ENCODE measurements at regions of chr12 and their contacts with region 1.

Region 1: DNA sequence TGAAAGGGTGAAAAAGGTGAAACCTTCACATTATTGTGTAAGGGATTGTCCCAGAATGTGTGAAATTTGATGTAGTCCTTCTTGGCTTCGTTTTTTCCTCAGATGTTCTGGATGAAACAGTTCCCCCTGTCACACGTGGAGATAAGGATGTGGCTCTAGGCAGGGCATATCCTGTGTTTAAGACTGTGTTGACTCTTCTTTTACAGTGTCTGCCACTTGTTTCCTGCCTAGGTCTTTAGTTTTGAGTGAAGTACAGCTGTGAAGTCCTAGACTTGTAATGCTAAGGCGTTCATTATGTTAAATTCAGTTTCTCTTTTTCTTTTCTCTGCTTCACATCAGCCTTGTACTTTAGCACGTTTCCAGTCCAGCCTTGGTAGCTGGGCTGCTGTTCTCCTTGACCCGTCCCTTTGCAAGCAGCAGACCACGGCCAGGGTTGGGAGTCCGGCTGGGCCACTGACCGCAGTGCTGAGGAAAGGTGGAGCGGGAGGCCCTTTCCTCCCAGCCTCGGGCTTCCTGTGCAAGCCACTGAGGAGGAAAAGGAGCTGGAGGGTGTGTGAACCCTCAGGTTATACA is 59.1 kb downstream of the RASSF3 start:
- DNase-seq: peak; percentile 73
- ATAC-seq: peak; percentile 82
- H3K4me3 ChIP-seq: peak overlapping the region; percentile 74
- H3K27ac ChIP-seq: peak overlapping the region; percentile 91
- H3K4me1 ChIP-seq: peaks cover 77% of the 10 kb centered on the region
- H3K27me3 ChIP-seq: no peaks in the 10 kb centered on the region
- CTCF ChIP-seq: no peak
- EP300 ChIP-seq: no peak
- POLR2A ChIP-seq: peak; percentile 31; the same call in 1 of the 2 replicates
- RAD21 ChIP-seq: no peak

Region 2: DNA sequence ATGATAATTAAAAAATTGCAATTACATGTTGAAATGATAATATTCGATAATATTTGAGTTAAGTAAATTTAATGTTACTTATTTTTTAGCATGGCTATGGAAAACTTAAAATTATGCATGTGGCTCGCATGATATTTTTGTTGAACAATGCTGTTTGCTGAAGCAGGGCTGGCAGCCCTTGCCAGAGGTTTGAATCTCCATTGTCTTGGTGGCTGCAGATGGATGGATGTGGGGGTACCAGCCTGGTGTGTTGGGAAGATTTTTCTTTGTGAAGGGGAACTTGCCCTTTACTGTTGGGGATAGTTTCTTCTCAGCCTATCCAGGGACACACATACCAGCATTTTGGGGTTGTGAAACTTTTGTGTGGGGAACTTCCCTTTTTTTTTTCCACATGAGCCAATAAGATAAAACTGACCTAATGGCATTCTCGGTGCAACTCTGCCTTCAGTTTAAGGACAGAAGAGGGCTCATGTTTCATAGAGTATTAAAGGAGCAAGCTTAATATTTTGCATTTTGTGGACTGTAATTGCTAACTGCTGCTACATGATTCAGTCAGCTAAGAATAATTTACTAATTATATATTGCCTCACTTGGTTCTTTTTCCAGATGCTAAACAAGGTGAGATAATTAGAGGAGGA is 50.3 kb before region 1 on chr12:
- CTCF ChIA-PET with region 1: interaction called, 7 read pairs
- POLR2A ChIA-PET with region 1: interaction called, 13 read pairs
- RAD21 ChIA-PET with region 1: interaction called, 11 read pairs
- SMC1A ChIA-PET with region 1: interaction called, 62 read pairs
- in situ Hi-C with region 1: no loop called
- intact Hi-C with region 1: loop called (anchors 2 kb)
- DNase-seq: peak; percentile 77
- ATAC-seq: peak; percentile 59
- H3K4me3 ChIP-seq: peak overlapping the region; percentile 57
- H3K27ac ChIP-seq: peak overlapping the region; percentile 93
- H3K4me1 ChIP-seq: peaks cover 49% of the 10 kb centered on the region
- H3K27me3 ChIP-seq: no peaks in the 10 kb centered on the region
- CTCF ChIP-seq: no peak
- EP300 ChIP-seq: peak; percentile 38 to 42; a peak in 1 of 4 replicates
- POLR2A ChIP-seq: no peak
- RAD21 ChIP-seq: 0 out of 2 replicates have a peak, but pooled peaks have one; percentile 6

Region 3: DNA sequence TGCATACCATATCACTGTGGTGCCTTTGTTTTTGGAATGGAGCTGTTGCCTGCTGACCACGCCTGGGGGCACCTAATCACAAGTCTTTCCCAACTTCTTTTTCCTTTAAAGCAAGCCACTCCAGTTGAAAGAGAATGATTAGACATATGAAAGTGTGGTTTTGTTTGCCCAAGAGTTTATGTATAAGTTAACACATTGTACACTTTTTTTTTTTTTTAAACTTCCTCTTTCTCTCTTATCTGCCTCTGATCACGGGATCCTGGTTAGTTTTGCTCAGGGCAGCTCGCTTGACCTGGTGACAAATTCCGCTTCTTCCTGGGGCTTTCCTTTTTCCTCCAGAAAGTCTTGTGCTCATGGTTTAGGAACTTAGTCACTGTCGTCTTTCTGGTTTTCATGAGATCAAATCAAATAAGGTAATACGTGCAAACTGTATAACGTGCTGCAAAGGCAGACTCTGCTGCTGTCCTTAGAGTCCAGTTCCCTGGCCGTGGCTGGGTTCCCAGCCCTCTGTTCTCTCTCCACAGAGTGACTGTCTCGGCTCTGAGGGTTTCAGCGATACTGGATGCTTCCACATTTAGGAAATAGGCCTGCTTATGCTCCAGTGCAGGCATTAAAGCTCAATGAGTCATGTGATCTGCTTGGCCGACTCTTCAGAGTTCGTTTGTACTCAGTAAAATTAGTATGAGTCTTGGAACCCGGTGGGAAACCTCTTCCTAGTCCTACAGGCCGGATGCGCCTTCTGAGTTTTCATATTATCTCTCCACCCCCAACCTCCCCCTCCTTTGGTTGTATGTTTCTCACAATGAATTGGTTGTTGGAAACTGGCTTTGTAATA is 43.9 kb before region 1 on chr12:
- CTCF ChIA-PET with region 1: interaction called, 14 read pairs
- POLR2A ChIA-PET with region 1: interaction called, 13 read pairs
- RAD21 ChIA-PET with region 1: interaction called, 11 read pairs
- SMC1A ChIA-PET with region 1: interaction called, 62 read pairs
- in situ Hi-C with region 1: no loop called
- intact Hi-C with region 1: loop called (anchors 2 kb)
- DNase-seq: peak; percentile 78
- ATAC-seq: peak; percentile 64
- H3K4me3 ChIP-seq: peak overlapping the region; percentile 66
- H3K27ac ChIP-seq: peak overlapping the region; percentile 98
- H3K4me1 ChIP-seq: peaks cover 39% of the 10 kb centered on the region
- H3K27me3 ChIP-seq: no peaks in the 10 kb centered on the region
- CTCF ChIP-seq: 0 out of 6 replicates have a peak, but pooled peaks of 1 of the 3 experiments have one; percentile 6
- EP300 ChIP-seq: peak in 1 of 2 experiments; percentile 76; a peak in 2 of 4 replicates
- POLR2A ChIP-seq: peak; percentile 44; the same call in 1 of the 2 replicates
- RAD21 ChIP-seq: no peak

Region 4: DNA sequence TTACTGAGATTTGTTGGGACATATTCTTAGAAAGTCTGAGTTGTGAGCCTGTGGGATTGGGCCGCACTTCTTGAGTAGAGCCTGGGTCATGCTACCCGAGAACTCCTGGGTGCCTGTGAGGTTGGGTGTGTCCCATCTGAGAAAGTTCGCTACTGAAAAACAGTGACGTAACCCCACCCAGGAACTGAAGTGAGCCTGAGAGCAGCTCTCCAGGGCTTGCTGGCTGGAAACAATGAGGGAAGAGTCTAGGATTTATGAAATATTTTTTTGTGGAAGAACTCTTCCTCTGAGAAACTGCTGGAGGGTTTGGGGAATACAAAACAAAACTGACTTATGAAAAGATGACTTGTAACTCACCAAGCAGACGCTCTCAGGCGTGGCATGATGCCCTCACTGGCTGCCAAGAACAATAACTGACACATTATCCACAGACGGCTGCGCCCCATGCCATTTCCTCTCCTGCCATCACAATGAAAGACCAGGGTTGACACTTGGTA is 10.2 kb after region 1 on chr12:
- CTCF ChIA-PET with region 1: interaction called, 7 read pairs
- POLR2A ChIA-PET with region 1: interaction called, 7 read pairs
- RAD21 ChIA-PET with region 1: interaction called, 7 read pairs
- SMC1A ChIA-PET with region 1: interaction called, 41 read pairs
- in situ Hi-C with region 1: no loop called
- intact Hi-C with region 1: no loop called
- DNase-seq: no peak
- ATAC-seq: peak; percentile 53
- H3K4me3 ChIP-seq: no peak overlapping the region
- H3K27ac ChIP-seq: peak overlapping the region; percentile 35; the same call in 1 of the 2 replicates
- H3K4me1 ChIP-seq: peaks cover 53% of the 10 kb centered on the region
- H3K27me3 ChIP-seq: no peaks in the 10 kb centered on the region
- CTCF ChIP-seq: no peak
- EP300 ChIP-seq: no peak
- POLR2A ChIP-seq: no peak
- RAD21 ChIP-seq: no peak